WTC11 (cell line): ENCODE measurements at regions of chr14 and their contacts with region 1.

Region 1: GRCh38 chr14:64891839-64892375 is 12.2 kb upstream of the SPTB start:
- DNase-seq: no peak
- ATAC-seq: peak; percentile 78
- H3K4me3 Mint-ChIP-seq: no peak overlapping the region
- H3K27ac Mint-ChIP-seq: no peak overlapping the region
- H3K4me1 Mint-ChIP-seq: no peaks in the 10 kb centered on the region
- H3K27me3 Mint-ChIP-seq: peaks cover 3% of the 10 kb centered on the region; the same call in 1 of the 2 replicates
- CTCF ChIP-seq: peak; percentile 29; the same call in 1 of the 2 replicates

Region 2: DNA sequence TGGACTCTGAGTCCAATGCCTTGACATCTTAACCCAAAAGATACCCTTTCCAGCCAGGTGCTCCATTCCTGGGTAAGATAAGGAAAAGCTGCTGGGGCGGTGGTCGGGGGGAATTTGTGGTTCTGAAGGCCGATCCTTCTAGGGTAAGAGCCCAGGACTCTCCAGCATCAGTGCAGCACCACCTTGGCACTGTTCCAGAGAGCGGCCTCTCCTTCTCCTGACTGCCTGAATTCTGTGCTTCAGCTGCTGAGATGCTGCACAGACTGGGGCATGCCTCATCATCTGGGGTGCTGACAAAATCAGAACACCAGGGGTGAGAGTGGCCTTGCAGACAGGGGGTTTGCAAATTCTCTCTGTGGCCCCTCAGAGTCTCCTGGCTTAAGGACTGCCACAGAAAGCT is 99.7 kb before region 1 on chr14:
- CTCF ChIA-PET with region 1: interaction called, 15 read pairs
- POLR2A ChIA-PET with region 1: no interaction called
- DNase-seq: no peak
- ATAC-seq: no peak
- H3K4me3 Mint-ChIP-seq: no peak overlapping the region
- H3K27ac Mint-ChIP-seq: no peak overlapping the region
- H3K4me1 Mint-ChIP-seq: peaks cover 14% of the 10 kb centered on the region
- H3K27me3 Mint-ChIP-seq: no peaks in the 10 kb centered on the region; the same call in 1 of the 2 replicates
- CTCF ChIP-seq: no peak

Region 3: DNA sequence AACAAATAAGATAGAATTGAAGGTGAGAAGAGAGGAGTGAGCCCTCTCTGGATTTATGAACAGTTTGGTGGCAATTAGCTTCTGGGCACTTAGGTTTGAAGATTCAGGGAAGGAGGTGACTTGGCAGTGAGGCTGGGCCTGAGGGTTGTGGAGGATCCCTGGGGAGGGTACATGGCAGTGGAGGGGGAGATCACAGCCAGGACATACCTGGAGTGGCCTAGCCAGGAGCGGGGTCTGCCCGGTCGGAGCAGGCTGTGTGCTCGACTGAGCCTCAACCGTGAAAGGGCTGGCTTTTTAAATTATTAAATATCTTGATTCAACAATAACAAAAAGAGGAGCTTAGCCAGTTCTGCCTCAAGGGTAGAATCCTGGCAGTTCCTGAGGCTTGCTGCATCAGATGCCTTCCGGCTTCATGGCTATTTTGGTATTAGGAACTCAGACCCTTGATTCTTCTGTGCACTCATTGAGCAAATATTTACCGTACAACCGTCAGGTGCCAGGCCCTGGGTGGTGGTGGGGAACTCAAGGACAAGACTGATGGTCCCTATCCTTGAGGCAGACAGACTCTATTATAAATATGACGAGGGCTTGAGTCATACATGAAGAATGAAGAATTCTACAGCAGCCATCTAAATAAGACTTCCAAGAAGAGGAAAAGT is 85.6 kb before region 1 on chr14:
- CTCF ChIA-PET with region 1: interaction called, 126 read pairs
- POLR2A ChIA-PET with region 1: no interaction called
- DNase-seq: no peak
- ATAC-seq: no peak
- H3K4me3 Mint-ChIP-seq: no peak overlapping the region
- H3K27ac Mint-ChIP-seq: no peak overlapping the region
- H3K4me1 Mint-ChIP-seq: peaks cover 3% of the 10 kb centered on the region; the same call in 1 of the 2 replicates
- H3K27me3 Mint-ChIP-seq: no peaks in the 10 kb centered on the region
- CTCF ChIP-seq: no peak

Region 4: DNA sequence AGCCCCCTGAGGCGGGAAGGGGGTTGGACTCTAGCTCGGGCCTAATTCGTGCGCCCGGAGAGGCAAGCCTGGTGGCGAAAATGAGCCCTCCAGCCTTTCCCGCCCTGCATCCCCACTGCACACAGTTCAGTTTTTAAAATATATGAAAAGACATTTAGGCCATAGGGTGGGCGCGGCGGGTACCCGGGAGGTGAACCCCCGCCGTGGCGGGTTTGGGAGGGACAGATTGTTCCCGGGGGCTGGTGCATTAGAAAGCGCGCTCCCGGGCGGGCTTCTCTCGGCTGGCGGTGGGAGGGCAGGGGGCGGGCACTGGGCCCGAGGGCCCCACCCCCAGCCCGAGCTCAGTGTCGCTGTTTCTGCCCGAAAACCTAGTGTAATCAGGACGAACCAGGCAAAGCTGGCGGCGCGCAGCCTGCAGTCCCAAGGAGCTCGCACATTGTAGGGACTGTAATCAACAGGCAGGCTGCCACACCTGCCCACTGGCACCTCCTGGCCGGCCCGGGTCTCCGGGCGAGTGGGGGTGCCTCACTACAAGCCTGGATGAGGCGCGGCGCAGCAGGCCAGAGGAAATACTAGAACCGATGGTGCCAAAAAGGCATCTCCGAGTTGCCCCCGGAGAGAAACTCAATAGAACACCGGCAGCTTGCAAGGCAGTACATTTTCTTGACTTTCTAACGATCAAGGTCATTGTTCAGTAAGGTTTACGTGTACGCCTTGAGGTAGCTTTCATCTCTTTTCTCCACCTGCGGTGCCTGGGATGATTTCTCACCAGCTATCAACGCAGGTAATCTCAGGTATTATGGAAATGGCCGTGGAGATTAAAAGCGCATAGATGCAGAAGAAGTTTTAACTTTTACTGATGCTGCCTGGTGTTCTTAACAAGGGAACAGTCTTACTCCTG is 11.4 kb before region 1 on chr14:
- CTCF ChIA-PET with region 1: interaction called, 31 read pairs
- POLR2A ChIA-PET with region 1: no interaction called
- DNase-seq: peak; percentile 77
- ATAC-seq: peak; percentile 85
- H3K4me3 Mint-ChIP-seq: peak overlapping the region; percentile 88
- H3K27ac Mint-ChIP-seq: peak overlapping the region; percentile 41; the same call in 1 of the 2 replicates
- H3K4me1 Mint-ChIP-seq: peaks cover 18% of the 10 kb centered on the region
- H3K27me3 Mint-ChIP-seq: peaks cover 70% of the 10 kb centered on the region
- CTCF ChIP-seq: no peak